Heart left ventricle (tissue), 16 donors: ENCODE measurements at regions of chr6 and their contacts with region 1.

Region 1: GRCh38 chr6:146913842-146914488 is 290.3 kb upstream of the STXBP5 start:
- DNase-seq: peak; percentile 43 to 82 (median 59)
- ATAC-seq: peak; percentile 82 to 96 (median 90)
- H3K4me3 ChIP-seq: peak overlapping the region in 9 of 12 donors; percentile 13 to 45 (median 29)
- H3K27ac ChIP-seq: peak overlapping the region; percentile 48 to 88 (median 68)
- H3K4me1 ChIP-seq: peaks cover 0 to 34% (median 11%) of the 10 kb centered on the region in 12 donors
- H3K27me3 ChIP-seq: no peaks in the 10 kb centered on the region
- CTCF ChIP-seq: no peak
- POLR2A ChIP-seq: no peak

Region 2: DNA sequence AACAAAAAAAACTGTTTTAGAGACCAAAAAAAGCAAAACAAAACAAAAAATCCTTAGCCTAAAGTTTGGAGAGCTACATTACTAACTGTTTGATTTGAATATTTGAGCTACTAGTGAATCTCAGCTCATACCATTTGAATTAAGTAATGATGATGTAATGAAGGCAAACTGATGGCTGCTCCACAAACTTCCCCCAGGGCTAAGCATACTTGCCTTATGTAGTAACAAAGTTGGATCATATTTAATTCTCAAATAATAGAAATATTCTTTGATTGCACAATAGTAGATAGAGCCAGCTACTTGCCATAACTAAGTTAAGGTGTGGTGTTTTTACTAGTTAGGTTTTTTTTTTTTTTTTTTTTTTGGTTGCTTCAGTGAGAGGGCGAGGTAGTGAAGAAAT is 367.5 kb before region 1 on chr6:
- intact Hi-C with region 1: no loop called
- DNase-seq: no peak
- ATAC-seq: peak in 2 of 4 donors; percentile 25 to 30
- H3K4me3 ChIP-seq: peak overlapping the region in 8 of 12 donors; percentile 64 to 88 (median 84)
- H3K27ac ChIP-seq: peak overlapping the region in 10 of 12 donors; percentile 32 to 98 (median 92)
- H3K4me1 ChIP-seq: peaks cover 0 to 53% (median 23%) of the 10 kb centered on the region in 12 donors
- H3K27me3 ChIP-seq: no peaks in the 10 kb centered on the region
- CTCF ChIP-seq: no peak
- POLR2A ChIP-seq: no peak

Region 3: GRCh38 chr6:146775226-146775625 is 138.7 kb before region 1 on chr6:
- intact Hi-C with region 1: no loop called
- DNase-seq: no peak
- ATAC-seq: no peak
- H3K4me3 ChIP-seq: no peak overlapping the region
- H3K27ac ChIP-seq: no peak overlapping the region
- H3K4me1 ChIP-seq: peaks cover 0 to 7% (median 0%) of the 10 kb centered on the region in 12 donors
- H3K27me3 ChIP-seq: no peaks in the 10 kb centered on the region
- CTCF ChIP-seq: peak in 1 of 12 donors; percentile 16
- POLR2A ChIP-seq: no peak

Region 4: GRCh38 chr6:147126618-147127022 is 212.7 kb after region 1 on chr6:
- intact Hi-C with region 1: loop called in 1 of 10 experiments (anchors 5 kb)
- DNase-seq: peak in 4 of 5 donors; percentile 18 to 54 (median 28)
- ATAC-seq: peak; percentile 85 to 98 (median 96)
- H3K4me3 ChIP-seq: no peak overlapping the region
- H3K27ac ChIP-seq: peak overlapping the region in 7 of 12 donors; percentile 15 to 56 (median 40)
- H3K4me1 ChIP-seq: peaks cover 0 to 16% (median 0%) of the 10 kb centered on the region in 12 donors
- H3K27me3 ChIP-seq: no peaks in the 10 kb centered on the region
- CTCF ChIP-seq: no peak
- POLR2A ChIP-seq: no peak